Heart left ventricle (tissue), 16 donors: ENCODE measurements at regions of chr1 and their contacts with region 1.

Region 1: DNA sequence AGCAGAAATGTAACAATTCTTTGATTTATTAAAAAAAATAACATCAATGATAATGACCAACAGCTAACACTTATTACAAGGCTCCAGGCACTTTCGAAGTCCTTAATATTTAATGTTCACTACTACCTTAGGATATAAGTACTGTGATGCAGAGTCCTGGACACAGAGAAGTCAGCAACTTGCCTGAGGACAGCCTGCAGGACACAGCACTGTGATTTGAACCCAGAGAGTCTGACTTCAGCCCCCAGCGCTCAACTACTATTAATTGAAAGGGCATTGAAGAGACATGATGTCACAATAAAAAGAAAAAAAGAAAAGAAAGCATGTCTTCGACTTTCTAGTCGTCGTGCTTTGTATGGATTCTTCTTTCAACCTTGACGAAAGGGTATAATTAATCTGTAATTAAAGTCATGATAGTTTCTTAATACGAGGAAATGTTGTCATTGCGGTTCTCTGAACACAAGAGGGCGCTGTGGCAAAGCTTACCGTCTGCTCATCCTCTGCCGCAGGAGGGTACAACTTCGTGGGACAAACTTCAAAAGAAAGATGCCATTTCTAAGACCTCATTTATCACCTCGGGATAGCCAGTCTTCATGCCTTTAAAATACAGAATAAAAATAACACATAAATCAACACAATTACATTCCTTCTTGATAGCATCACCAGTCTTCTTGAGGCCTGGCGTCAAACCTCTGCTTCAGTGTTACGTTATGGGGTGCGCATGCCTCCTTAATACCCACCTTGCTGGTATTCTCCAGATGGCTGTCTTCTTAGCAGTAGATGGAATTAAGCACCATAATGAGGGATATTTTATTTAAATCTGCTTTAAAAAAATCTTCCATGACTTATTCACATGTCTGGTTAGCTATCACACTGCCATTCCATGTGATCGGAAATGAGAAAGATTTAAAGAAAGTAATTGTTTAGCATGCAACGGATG is 240.1 kb downstream of the DISC1 start:
- DNase-seq: peak; percentile 49 to 70 (median 59)
- ATAC-seq: peak in 3 of 4 donors; percentile 35 to 45 (median 41)
- H3K4me3 ChIP-seq: no peak overlapping the region
- H3K27ac ChIP-seq: no peak overlapping the region
- H3K4me1 ChIP-seq: peaks cover 12 to 49% (median 36%) of the 10 kb centered on the region in 12 donors
- H3K27me3 ChIP-seq: no peaks in the 10 kb centered on the region
- CTCF ChIP-seq: peak; percentile 81 to 96 (median 90)
- POLR2A ChIP-seq: no peak

Region 2: DNA sequence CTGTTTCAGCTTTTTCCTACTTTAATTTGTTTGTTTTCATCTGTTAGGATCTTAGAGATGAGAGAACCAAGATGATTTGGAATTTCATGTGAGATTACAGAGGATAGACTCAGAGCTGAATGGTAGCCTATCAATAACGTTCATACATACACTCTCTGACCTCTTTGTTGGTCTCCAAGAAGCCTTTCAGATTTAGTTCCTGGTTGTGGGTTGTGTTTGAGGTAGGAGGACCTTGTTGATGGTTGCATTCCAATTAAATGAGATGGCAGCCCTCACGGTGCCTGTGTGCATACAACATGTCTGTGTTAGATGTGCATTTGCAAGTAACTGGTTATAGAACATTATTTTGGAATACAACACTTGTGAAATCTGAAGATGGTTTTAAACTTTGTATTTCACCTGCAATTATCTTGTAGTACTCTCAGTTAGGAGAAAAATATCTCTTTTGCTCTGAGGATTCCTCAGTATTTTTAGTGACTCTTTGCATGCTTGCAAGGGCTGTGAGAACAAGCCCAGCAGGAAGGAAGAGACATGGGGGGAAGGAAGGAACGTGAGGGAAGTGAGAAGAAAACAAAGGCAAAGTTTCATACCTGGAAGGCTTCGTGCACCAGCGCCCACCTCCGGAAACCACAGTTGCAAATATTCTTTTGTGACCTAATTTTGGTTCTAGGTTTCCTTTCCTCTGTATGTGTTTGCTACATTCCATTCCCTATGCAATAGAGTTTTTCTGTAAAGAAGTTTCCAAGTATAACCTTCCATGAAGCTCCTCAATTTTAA is 51.8 kb after region 1 on chr1:
- intact Hi-C with region 1: loop called in 2 of 10 experiments (anchors 5 kb)
- DNase-seq: no peak
- ATAC-seq: no peak
- H3K4me3 ChIP-seq: no peak overlapping the region
- H3K27ac ChIP-seq: peak overlapping the region in 10 of 12 donors; percentile 50 to 78 (median 64)
- H3K4me1 ChIP-seq: peaks cover 0 to 38% (median 24%) of the 10 kb centered on the region in 12 donors
- H3K27me3 ChIP-seq: no peaks in the 10 kb centered on the region
- CTCF ChIP-seq: no peak
- POLR2A ChIP-seq: no peak

Region 3: GRCh38 chr1:232012773-232013386 is 146.2 kb after region 1 on chr1:
- intact Hi-C with region 1: loop called in 2 of 10 experiments (anchors 10 kb)
- DNase-seq: peak in 4 of 5 donors; percentile 68 to 82 (median 70)
- ATAC-seq: peak; percentile 86 to 97 (median 94)
- H3K4me3 ChIP-seq: peak overlapping the region in 10 of 12 donors; percentile 1 to 38 (median 18)
- H3K27ac ChIP-seq: peak overlapping the region; percentile 53 to 74 (median 67)
- H3K4me1 ChIP-seq: peaks cover 0 to 38% (median 17%) of the 10 kb centered on the region in 12 donors
- H3K27me3 ChIP-seq: no peaks in the 10 kb centered on the region
- CTCF ChIP-seq: no peak
- POLR2A ChIP-seq: no peak

Region 4: GRCh38 chr1:232319072-232319471 is 452.4 kb after region 1 on chr1:
- intact Hi-C with region 1: loop called in 2 of 10 experiments (anchors 5 kb)
- DNase-seq: peak; percentile 87 to 95 (median 89)
- ATAC-seq: peak; percentile 95 to 96 (median 96)
- H3K4me3 ChIP-seq: no peak overlapping the region
- H3K27ac ChIP-seq: peak overlapping the region in 11 of 12 donors; percentile 5 to 95 (median 79)
- H3K4me1 ChIP-seq: peaks cover 0 to 17% (median 11%) of the 10 kb centered on the region in 12 donors
- H3K27me3 ChIP-seq: no peaks in the 10 kb centered on the region
- CTCF ChIP-seq: no peak
- POLR2A ChIP-seq: no peak

Region 5: DNA sequence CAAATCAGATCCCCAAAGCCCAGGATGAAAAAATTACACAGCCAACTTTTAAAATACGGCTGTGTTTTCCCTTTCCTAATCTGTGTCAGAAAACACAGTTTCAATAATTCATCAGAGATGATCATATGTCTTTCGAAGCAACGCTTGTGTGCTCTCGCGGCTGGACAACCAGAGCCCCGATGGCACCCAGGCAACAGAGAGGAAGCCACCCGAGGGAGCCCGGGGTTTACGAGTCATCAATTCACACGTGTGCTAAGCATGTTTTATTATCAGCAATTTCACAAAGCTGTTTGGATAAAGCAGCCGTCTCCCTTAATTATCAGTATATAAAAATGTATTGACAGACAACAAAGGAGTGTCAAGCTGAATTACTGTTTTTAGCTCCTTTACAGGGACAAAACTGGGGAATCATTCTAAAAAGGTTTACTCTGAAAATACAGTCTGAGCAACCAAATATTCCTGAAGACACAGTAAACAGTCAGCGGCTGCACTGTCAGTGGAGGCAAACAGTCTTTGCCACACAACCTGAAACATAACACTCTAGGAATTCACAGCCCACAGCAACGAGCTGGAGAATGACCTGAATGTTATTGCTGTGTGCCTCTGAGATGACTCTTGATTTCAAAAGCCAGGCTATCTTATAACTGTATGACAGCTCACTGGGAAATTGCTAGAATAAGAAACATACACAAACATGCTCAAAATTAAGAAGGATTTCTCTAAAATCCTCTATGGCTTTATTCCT is 562.3 kb after region 1 on chr1:
- intact Hi-C with region 1: loop called in 2 of 10 experiments (anchors 10 kb)
- DNase-seq: no peak
- ATAC-seq: peak in 3 of 4 donors; percentile 44 to 62 (median 48)
- H3K4me3 ChIP-seq: no peak overlapping the region
- H3K27ac ChIP-seq: peak overlapping the region in 8 of 12 donors; percentile 22 to 68 (median 39)
- H3K4me1 ChIP-seq: peaks cover 0 to 65% (median 26%) of the 10 kb centered on the region in 12 donors
- H3K27me3 ChIP-seq: no peaks in the 10 kb centered on the region
- CTCF ChIP-seq: no peak
- POLR2A ChIP-seq: no peak

Region 6: DNA sequence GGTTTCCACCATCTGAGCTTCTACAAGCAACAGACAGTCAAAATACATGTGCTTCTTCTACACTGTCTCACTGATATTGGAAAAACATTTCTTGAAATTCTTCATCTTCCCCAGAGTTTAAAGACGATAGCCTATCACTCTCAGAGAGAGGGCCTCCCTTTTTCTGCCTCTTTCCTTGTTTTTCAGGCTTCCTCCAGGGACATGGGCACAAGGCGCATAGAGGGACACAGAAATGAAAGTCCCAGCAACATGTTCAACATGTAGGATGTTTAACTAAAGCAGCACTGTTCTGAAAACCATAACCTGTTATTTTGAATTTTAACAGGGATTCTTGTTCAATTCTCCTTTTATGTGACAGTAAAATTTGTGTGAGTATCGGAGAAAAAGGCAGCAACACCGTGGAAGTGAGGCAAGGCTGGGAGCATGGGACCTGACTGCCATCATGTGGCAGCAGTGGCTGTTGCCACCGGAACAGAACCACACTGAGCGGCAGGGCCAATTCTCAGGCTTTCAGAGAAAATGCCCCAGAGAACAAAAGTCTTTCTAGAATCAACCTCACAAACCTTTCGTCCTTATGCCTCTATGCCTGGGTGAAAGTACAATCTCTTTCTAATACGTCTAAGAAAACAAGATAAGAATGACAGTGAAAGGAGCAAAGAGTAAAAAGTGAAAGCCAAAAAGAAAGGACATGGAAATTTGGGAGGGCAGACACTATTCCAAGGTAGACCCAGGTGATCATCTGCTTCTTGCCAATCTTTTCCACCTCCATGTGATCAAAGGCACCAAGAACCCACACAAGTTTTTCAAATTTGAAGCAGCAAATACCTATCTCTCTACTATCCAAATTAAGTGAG is 1374.4 kb after region 1 on chr1:
- intact Hi-C with region 1: loop called in 2 of 10 experiments (anchors 5 to 10 kb)
- DNase-seq: peak; percentile 56 to 72 (median 62)
- ATAC-seq: peak; percentile 83 to 94 (median 92)
- H3K4me3 ChIP-seq: peak overlapping the region in 7 of 12 donors; percentile 8 to 17 (median 11)
- H3K27ac ChIP-seq: no peak overlapping the region
- H3K4me1 ChIP-seq: peaks cover 0 to 25% (median 6%) of the 10 kb centered on the region in 12 donors
- H3K27me3 ChIP-seq: no peaks in the 10 kb centered on the region
- CTCF ChIP-seq: peak; percentile 67 to 91 (median 82)
- POLR2A ChIP-seq: no peak